ENCODE measurements at regions of chr14 and their contacts with region 1.

Region 1: GRCh38 chr14:52735921-52736489 is 6.0 kb downstream of the STYX start:
- DNase-seq: no peak
- ATAC-seq: peak in 2 of 4 experiments; percentile 24 to 32
- H3K4me3 ChIP-seq: no peak overlapping the region
- H3K4me3 Mint-ChIP-seq: peak overlapping the region; percentile 13 to 41 (median 40)
- H3K27ac ChIP-seq: peak overlapping the region; percentile 41
- H3K27ac Mint-ChIP-seq: peak overlapping the region; percentile 86 to 93
- H3K4me1 ChIP-seq: peaks cover 22 to 28% of the 10 kb centered on the region in 2 experiments
- H3K4me1 Mint-ChIP-seq: peaks cover 81 to 89% (median 87%) of the 10 kb centered on the region in 3 donors
- H3K27me3 ChIP-seq: no peaks in the 10 kb centered on the region
- H3K27me3 Mint-ChIP-seq: no peaks in the 10 kb centered on the region

Region 2: GRCh38 chr14:52706724-52707706 is 29.0 kb before region 1 on chr14 and contains the start of gene PSMC6:
- CTCF ChIA-PET with region 1: no interaction called
- POLR2A ChIA-PET with region 1: no interaction called
- DNase-seq: peak; percentile 86 to 98 (median 94)
- ATAC-seq: peak; percentile 98 to 99 (median 98)
- H3K4me3 ChIP-seq: peak within 1 kb of the TSS; percentile 87 to 89
- H3K4me3 Mint-ChIP-seq: peak within 1 kb of the TSS; percentile 98 to 100 (median 99)
- H3K27ac ChIP-seq: peak within 1 kb of the TSS; percentile 83
- H3K27ac Mint-ChIP-seq: peak within 1 kb of the TSS; percentile 98 to 99
- H3K4me1 ChIP-seq: peaks cover 12 to 16% of the 10 kb centered on the region in 2 experiments
- H3K4me1 Mint-ChIP-seq: peaks cover 37 to 52% (median 50%) of the 10 kb centered on the region in 3 donors
- H3K27me3 ChIP-seq: no peaks in the 10 kb centered on the region
- H3K27me3 Mint-ChIP-seq: no peaks in the 10 kb centered on the region
- total RNA-seq, gene PSMC6: 71.4 to 103 (median 74.9) TPM

Region 3: DNA sequence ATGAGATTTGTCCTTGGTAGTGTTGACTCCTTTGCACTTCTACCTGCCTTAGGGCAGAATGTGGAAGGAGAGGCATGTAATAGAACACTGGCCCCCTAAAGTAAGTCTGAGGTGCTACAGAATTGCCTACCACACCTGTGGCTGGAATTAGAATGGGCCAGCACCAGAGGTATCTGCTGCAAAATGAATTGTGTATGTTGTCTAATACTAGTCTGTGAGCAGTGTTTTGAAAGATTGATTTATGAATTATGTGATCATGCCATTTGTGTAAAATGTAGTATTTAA is 11.7 kb before region 1 on chr14:
- CTCF ChIA-PET with region 1: interaction called in 1 of 2 experiments, 10 read pairs
- POLR2A ChIA-PET with region 1: interaction called in 1 of 2 experiments, 12 read pairs
- DNase-seq: no peak
- ATAC-seq: peak in 1 of 4 experiments; percentile 27
- H3K4me3 ChIP-seq: no peak overlapping the region
- H3K4me3 Mint-ChIP-seq: no peak overlapping the region
- H3K27ac ChIP-seq: peak overlapping the region; percentile 2
- H3K27ac Mint-ChIP-seq: peak overlapping the region; percentile 81
- H3K4me1 ChIP-seq: no peaks in the 10 kb centered on the region
- H3K4me1 Mint-ChIP-seq: peaks cover 26 to 34% (median 27%) of the 10 kb centered on the region in 3 donors
- H3K27me3 ChIP-seq: no peaks in the 10 kb centered on the region
- H3K27me3 Mint-ChIP-seq: no peaks in the 10 kb centered on the region

Measured in T-cell (primary cell).